Caco-2 (cell line): ENCODE measurements at regions of chr1 and their contacts with region 1.

Region 1: GRCh38 chr1:94617134-94617805 is 75.7 kb upstream of the F3 start:
- DNase-seq: no peak
- H3K4me3 ChIP-seq: no peak overlapping the region
- H3K4me3 Mint-ChIP-seq: peak overlapping the region; percentile 67
- H3K27ac Mint-ChIP-seq: peak overlapping the region; percentile 86
- H3K4me1 ChIP-seq: peaks cover 50% of the 10 kb centered on the region
- H3K4me1 Mint-ChIP-seq: peaks cover 26% of the 10 kb centered on the region
- H3K27me3 ChIP-seq: no peaks in the 10 kb centered on the region
- H3K27me3 Mint-ChIP-seq: no peaks in the 10 kb centered on the region
- CTCF ChIP-seq: no peak

Region 2: DNA sequence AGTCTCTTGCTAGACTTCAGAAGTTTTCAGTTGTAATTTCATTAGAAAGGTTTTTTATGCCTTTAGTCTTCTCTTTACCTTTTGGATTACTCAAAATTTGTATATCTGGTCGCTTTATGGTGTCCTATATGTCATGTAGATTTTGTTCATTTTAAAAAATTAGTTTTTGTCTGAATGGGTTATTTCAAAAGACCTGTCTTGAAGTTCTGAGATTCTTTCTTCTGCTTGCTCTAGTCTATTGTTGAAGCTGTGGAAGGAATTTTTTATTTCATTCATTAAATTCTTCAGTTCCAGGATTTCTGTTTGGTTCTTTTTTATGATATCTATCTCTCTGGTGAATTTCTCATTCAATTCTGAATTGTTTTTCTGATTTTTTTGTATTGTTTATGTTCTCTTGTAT is 661.5 kb before region 1 on chr1:
- CTCF ChIA-PET with region 1: no interaction called
- POLR2A ChIA-PET with region 1: no interaction called
- intact Hi-C with region 1: no loop called
- DNase-seq: no peak
- H3K4me3 ChIP-seq: no peak overlapping the region
- H3K4me3 Mint-ChIP-seq: no peak overlapping the region
- H3K27ac Mint-ChIP-seq: no peak overlapping the region
- H3K4me1 ChIP-seq: no peaks in the 10 kb centered on the region
- H3K4me1 Mint-ChIP-seq: no peaks in the 10 kb centered on the region
- H3K27me3 ChIP-seq: no peaks in the 10 kb centered on the region
- H3K27me3 Mint-ChIP-seq: no peaks in the 10 kb centered on the region
- CTCF ChIP-seq: no peak

Region 3: DNA sequence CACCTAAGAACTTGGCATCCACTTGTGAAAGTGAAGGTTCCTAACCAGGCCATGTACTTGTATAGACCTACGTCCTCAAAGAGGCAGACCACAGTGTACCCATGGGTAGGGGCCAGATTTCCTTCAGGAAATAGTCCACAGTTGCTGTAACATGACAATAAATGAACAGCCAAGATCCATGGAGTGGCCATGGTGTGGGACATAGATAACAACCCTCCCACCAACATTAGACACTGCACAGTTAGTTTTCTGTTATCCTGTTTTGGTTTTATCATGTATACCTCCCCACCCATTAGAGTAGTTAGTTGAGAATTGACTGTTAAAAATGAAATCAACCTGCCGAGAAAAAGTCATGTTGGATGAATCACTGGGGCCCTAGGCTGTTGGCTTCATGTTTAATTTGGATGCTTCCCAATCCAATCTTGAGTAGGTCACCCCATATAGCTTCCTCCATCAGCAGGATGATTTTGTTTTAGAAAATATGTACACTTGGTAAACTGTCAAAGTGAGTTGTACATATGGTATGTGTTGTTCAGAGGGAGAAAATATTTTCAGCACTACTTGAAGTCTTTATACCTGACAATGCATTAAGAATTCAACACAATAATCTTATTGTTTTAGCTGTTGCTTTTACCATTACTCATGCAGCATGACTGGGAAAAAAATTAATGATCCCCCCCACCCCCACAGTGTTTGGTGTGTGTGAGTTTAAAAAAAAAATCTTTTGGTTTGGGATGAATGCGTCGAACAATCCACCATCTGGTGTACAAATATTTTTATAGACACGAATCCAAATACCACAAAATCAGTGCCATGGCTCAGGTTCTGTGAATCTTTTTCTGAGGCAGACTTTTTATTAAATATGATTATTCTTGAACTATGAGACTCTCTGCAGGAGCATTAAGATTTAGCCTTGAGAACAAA is 291.6 kb before region 1 on chr1:
- CTCF ChIA-PET with region 1: no interaction called
- POLR2A ChIA-PET with region 1: no interaction called
- intact Hi-C with region 1: no loop called
- DNase-seq: no peak
- H3K4me3 ChIP-seq: no peak overlapping the region
- H3K4me3 Mint-ChIP-seq: no peak overlapping the region
- H3K27ac Mint-ChIP-seq: no peak overlapping the region
- H3K4me1 ChIP-seq: peaks cover 83% of the 10 kb centered on the region
- H3K4me1 Mint-ChIP-seq: peaks cover 53% of the 10 kb centered on the region
- H3K27me3 ChIP-seq: no peaks in the 10 kb centered on the region
- H3K27me3 Mint-ChIP-seq: no peaks in the 10 kb centered on the region
- CTCF ChIP-seq: no peak

Region 4: GRCh38 chr1:94654031-94654430 is 36.8 kb after region 1 on chr1:
- CTCF ChIA-PET with region 1: no interaction called
- POLR2A ChIA-PET with region 1: no interaction called
- intact Hi-C with region 1: loop called (anchors 2 kb)
- DNase-seq: peak; percentile 49 to 75
- H3K4me3 ChIP-seq: no peak overlapping the region
- H3K4me3 Mint-ChIP-seq: no peak overlapping the region
- H3K27ac Mint-ChIP-seq: peak overlapping the region; percentile 67
- H3K4me1 ChIP-seq: peaks cover 37% of the 10 kb centered on the region
- H3K4me1 Mint-ChIP-seq: peaks cover 7% of the 10 kb centered on the region
- H3K27me3 ChIP-seq: no peaks in the 10 kb centered on the region
- H3K27me3 Mint-ChIP-seq: no peaks in the 10 kb centered on the region
- CTCF ChIP-seq: no peak